Calu3 (cell line): ENCODE measurements at regions of chr12 and their contacts with region 1.

Region 1: GRCh38 chr12:130747867-130748740 is 32.0 kb upstream of the RIMBP2 start:
- DNase-seq: peak; percentile 85
- H3K4me3 Mint-ChIP-seq: no peak overlapping the region
- H3K27ac Mint-ChIP-seq: no peak overlapping the region
- H3K4me1 Mint-ChIP-seq: no peaks in the 10 kb centered on the region
- H3K27me3 Mint-ChIP-seq: peaks cover 26% of the 10 kb centered on the region
- CTCF ChIP-seq: peak; percentile 90

Region 2: DNA sequence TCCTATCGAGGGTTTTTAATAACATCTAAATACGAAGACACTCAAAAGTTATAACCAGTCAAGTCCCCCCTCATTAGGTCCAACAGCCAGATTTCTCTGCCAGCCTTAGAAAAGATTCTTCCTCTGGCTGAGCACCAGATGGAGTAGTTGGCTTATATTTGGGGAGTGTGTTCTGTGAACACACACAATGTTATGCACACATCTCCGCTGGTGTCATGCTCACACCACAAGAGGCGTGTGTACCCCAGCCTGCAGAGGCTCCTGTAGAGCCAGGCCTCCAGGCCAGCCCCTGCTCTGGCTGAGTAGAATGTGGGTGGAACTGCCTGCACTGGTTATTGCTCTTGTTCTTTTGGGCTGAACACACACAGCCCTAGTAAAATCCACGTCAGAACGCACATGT is 346.4 kb before region 1 on chr12:
- CTCF ChIA-PET with region 1: no interaction called
- intact Hi-C with region 1: loop called (anchors 5 kb)
- DNase-seq: no peak
- H3K4me3 Mint-ChIP-seq: no peak overlapping the region
- H3K27ac Mint-ChIP-seq: no peak overlapping the region
- H3K4me1 Mint-ChIP-seq: no peaks in the 10 kb centered on the region
- H3K27me3 Mint-ChIP-seq: no peaks in the 10 kb centered on the region
- CTCF ChIP-seq: no peak